Ascending aorta (tissue), 2 donors: ENCODE measurements at regions of chr5 and their contacts with region 1.

Region 1: DNA sequence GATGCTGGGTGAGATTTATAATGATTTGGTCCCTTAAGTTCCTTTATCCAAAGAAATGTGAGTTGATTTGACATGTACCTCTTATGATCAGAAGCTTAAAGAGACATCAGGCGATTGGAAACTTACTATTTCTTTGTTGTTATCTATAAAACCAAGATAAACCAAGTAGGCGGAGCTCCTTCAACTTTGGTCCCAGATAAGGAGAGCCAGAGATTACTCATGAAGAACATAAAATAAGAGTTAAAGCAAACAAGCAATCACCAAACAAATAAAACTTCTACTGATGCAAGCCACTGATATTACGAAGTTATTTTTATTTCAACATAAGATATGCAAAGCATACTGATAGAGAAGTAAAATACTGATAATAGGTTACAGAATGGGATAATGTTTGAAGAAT is 141.5 kb upstream of the CDH18 start:
- DNase-seq: no peak
- H3K4me3 ChIP-seq: no peak overlapping the region
- H3K27ac ChIP-seq: no peak overlapping the region
- H3K4me1 ChIP-seq: no peaks in the 10 kb centered on the region
- H3K27me3 ChIP-seq: no peaks in the 10 kb centered on the region
- CTCF ChIP-seq: no peak

Region 2: GRCh38 chr5:19790829-19791466 is 338.5 kb before region 1 on chr5:
- intact Hi-C with region 1: loop called (anchors 5 kb)
- DNase-seq: no peak
- H3K4me3 ChIP-seq: no peak overlapping the region
- H3K27ac ChIP-seq: no peak overlapping the region
- H3K4me1 ChIP-seq: no peaks in the 10 kb centered on the region
- H3K27me3 ChIP-seq: no peaks in the 10 kb centered on the region
- CTCF ChIP-seq: no peak

Region 3: DNA sequence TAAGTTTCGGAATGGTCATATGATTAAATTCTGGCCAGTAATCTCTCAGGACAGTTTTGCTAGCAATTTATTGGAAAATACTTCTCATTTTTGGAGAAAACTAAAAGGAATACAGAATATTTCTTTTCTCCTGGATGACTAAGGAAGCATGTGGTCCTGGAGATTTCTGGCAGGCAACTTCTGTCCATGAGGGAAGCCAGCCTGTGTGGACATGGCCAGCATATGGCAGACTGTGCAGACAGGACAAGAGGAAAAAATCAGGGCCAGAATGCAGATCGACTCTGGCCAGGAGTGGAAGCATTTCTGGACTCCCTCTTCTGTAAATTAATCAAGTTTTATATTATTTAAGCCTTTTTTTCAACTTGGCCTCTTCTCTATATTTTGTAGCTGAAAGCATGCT is 41.1 kb before region 1 on chr5:
- intact Hi-C with region 1: no loop called
- DNase-seq: no peak
- H3K4me3 ChIP-seq: no peak overlapping the region
- H3K27ac ChIP-seq: no peak overlapping the region
- H3K4me1 ChIP-seq: no peaks in the 10 kb centered on the region
- H3K27me3 ChIP-seq: no peaks in the 10 kb centered on the region
- CTCF ChIP-seq: no peak

Region 4: DNA sequence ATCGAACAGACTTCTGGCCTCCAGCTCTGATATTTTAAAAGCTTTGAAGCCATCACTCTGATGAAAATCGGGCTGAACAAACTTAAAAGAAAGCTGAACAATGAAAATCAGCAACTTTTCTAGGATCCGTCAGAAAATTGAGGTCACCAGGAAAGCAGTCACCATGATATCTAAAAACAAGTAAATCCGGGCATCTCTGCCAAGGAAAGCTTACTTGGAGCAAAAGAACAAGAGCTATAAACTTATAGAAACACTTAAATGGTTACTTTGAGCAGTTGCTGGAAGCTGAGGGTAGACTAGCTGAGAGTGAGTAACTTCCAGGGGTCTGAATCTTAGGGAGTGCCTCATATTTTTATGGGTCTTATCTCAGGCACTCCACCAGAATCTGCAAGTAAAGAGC is 901.5 kb after region 1 on chr5:
- intact Hi-C with region 1: no loop called
- DNase-seq: no peak
- H3K4me3 ChIP-seq: no peak overlapping the region
- H3K27ac ChIP-seq: no peak overlapping the region
- H3K4me1 ChIP-seq: no peaks in the 10 kb centered on the region
- H3K27me3 ChIP-seq: no peaks in the 10 kb centered on the region
- CTCF ChIP-seq: no peak